AG04450 (cell line): ENCODE measurements at regions of chr15 and their contacts with region 1.

Region 1: GRCh38 chr15:83011271-83012075 is at the start of gene C15orf40:
- DNase-seq: peak; percentile 78
- H3K4me3 ChIP-seq: peak within 1 kb of the TSS; percentile 99
- H3K27ac ChIP-seq: peak within 1 kb of the TSS; percentile 80
- H3K27me3 ChIP-seq: no peaks in the 10 kb centered on the region
- CTCF ChIP-seq: peak; percentile 66
- polyA plus RNA-seq, gene C15orf40: 16.7 and 17.3 TPM in 2 replicates

Region 2: GRCh38 chr15:82985688-82986441 is 25.6 kb before region 1 on chr15 and contains the start of gene RAMAC:
- CTCF ChIA-PET with region 1: interaction called, 18 read pairs
- POLR2A ChIA-PET with region 1: no interaction called
- DNase-seq: peak; percentile 90
- H3K4me3 ChIP-seq: peak within 1 kb of the TSS; percentile 96
- H3K27ac ChIP-seq: peak within 1 kb of the TSS; percentile 57
- H3K27me3 ChIP-seq: no peaks in the 10 kb centered on the region
- CTCF ChIP-seq: no peak
- polyA plus RNA-seq, gene RAMAC: 29.4 and 37.4 TPM in 2 replicates

Region 3: GRCh38 chr15:82999905-83000671 is 11.4 kb before region 1 on chr15:
- CTCF ChIA-PET with region 1: interaction called, 55 read pairs
- POLR2A ChIA-PET with region 1: no interaction called
- DNase-seq: no peak
- H3K4me3 ChIP-seq: peak overlapping the region; percentile 45
- H3K27ac ChIP-seq: no peak overlapping the region
- H3K27me3 ChIP-seq: no peaks in the 10 kb centered on the region
- CTCF ChIP-seq: peak; percentile 55

Region 4: GRCh38 chr15:83053151-83053550 is 41.7 kb after region 1 on chr15:
- CTCF ChIA-PET with region 1: interaction called, 11 read pairs
- POLR2A ChIA-PET with region 1: no interaction called
- DNase-seq: no peak
- H3K4me3 ChIP-seq: no peak overlapping the region
- H3K27ac ChIP-seq: no peak overlapping the region
- H3K27me3 ChIP-seq: no peaks in the 10 kb centered on the region
- CTCF ChIP-seq: no peak

Region 5: GRCh38 chr15:83207009-83207621 is 195.6 kb after region 1 on chr15:
- CTCF ChIA-PET with region 1: interaction called, 10 read pairs
- POLR2A ChIA-PET with region 1: interaction called, 3 read pairs
- DNase-seq: no peak
- H3K4me3 ChIP-seq: peak overlapping the region; percentile 80
- H3K27ac ChIP-seq: no peak overlapping the region
- H3K27me3 ChIP-seq: no peaks in the 10 kb centered on the region
- CTCF ChIP-seq: no peak